Gastrocnemius medialis (tissue), 4 donors: ENCODE measurements at regions of chr15 and their contacts with region 1.

Region 1: GRCh38 chr15:50686468-50687301 is at the start of gene TRPM7:
- DNase-seq: peak; percentile 73 to 86
- ATAC-seq: peak; percentile 91 to 93
- H3K4me3 ChIP-seq: peak within 1 kb of the TSS; percentile 79 to 91 (median 84)
- H3K27ac ChIP-seq: peak within 1 kb of the TSS; percentile 90 to 99 (median 98)
- H3K4me1 ChIP-seq: peaks cover 10 to 30% of the 10 kb centered on the region in 2 donors
- H3K27me3 ChIP-seq: no peaks in the 10 kb centered on the region
- CTCF ChIP-seq: peak in 2 of 5 experiments; percentile 24 to 45
- POLR2A ChIP-seq: peak; percentile 96
- total RNA-seq, gene TRPM7: 8.4 to 23.2 (median 12.7) TPM

Region 2: GRCh38 chr15:50354838-50355618 is 331.7 kb before region 1 on chr15 and contains the start of gene GABPB1:
- in situ Hi-C with region 1: no loop called
- intact Hi-C with region 1: loop called (anchors 2 kb)
- DNase-seq: peak; percentile 79 to 80
- ATAC-seq: peak; percentile 87 to 90
- H3K4me3 ChIP-seq: peak within 1 kb of the TSS; percentile 79 to 94 (median 81)
- H3K27ac ChIP-seq: peak within 1 kb of the TSS; percentile 93 to 97 (median 94)
- H3K4me1 ChIP-seq: peaks cover 44 to 46% of the 10 kb centered on the region in 2 donors
- H3K27me3 ChIP-seq: no peaks in the 10 kb centered on the region
- CTCF ChIP-seq: no peak
- POLR2A ChIP-seq: peak; percentile 53 to 64
- total RNA-seq, gene GABPB1: 7.4 to 11.5 (median 8.7) TPM

Region 3: DNA sequence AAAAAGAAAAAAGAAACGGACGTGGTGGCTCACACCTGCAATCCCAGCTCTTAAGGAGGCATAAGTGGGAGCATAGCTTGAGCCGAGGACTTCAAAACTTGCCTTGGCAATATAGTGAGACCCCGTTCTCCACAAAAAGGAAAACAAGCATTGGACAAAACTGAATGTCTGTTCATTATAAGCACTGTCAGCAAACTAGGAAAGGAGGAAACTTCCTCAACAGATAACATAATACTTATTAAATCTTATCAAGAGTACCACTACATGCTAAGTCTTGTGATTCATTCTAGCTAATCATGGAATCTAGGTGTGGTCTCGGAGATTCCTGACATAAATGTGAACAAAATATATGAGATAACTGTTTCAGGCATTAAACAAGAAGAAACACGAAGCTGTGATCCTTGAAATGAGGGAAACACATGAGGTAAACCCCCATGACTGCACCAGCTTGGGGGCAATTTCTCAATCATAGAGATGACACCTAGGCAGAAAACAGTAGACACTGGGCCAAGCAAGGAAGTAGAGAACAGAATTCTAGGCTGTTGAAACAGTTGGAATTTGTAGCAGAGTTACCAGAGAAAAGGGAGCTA is 33.4 kb before region 1 on chr15:
- in situ Hi-C with region 1: no loop called
- intact Hi-C with region 1: no loop called
- DNase-seq: no peak
- ATAC-seq: no peak
- H3K4me3 ChIP-seq: no peak overlapping the region
- H3K27ac ChIP-seq: no peak overlapping the region
- H3K4me1 ChIP-seq: no peaks in the 10 kb centered on the region
- H3K27me3 ChIP-seq: no peaks in the 10 kb centered on the region
- CTCF ChIP-seq: no peak
- POLR2A ChIP-seq: no peak

Region 4: DNA sequence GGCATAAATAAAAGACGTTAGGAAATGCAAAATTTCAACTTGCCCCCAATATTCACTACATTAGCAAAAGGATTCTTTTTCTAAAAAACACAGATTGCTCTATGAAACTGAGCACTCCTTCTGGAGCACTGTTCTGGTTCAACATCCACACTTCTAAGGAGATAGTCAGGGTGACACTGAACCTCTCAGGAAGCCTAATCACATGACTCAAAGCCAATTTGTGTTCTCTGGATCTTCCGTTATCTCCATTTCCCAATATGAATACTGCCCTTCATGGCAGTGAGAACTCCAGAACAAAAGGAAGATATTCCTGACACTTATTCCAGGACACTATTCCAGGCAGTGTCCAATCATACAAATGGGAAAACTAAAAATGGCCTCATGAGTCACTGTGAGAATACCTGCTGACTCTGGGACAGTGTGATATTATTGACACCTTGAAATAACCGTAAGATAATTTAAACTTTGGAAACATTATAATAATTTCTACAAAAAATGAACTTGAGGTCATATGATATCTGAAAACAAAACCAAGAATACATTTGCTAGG is 21.3 kb after region 1 on chr15:
- in situ Hi-C with region 1: no loop called
- intact Hi-C with region 1: loop called (anchors 1 kb)
- DNase-seq: no peak
- ATAC-seq: peak; percentile 79 to 87
- H3K4me3 ChIP-seq: no peak overlapping the region
- H3K27ac ChIP-seq: peak overlapping the region; percentile 55 to 74 (median 72)
- H3K4me1 ChIP-seq: peaks cover 8 to 11% of the 10 kb centered on the region in 2 donors
- H3K27me3 ChIP-seq: no peaks in the 10 kb centered on the region
- CTCF ChIP-seq: no peak
- POLR2A ChIP-seq: no peak

Region 5: GRCh38 chr15:50735156-50735555 is 48.5 kb after region 1 on chr15:
- in situ Hi-C with region 1: no loop called
- intact Hi-C with region 1: no loop called
- DNase-seq: no peak
- ATAC-seq: no peak
- H3K4me3 ChIP-seq: no peak overlapping the region
- H3K27ac ChIP-seq: no peak overlapping the region
- H3K4me1 ChIP-seq: no peaks in the 10 kb centered on the region
- H3K27me3 ChIP-seq: no peaks in the 10 kb centered on the region
- CTCF ChIP-seq: no peak
- POLR2A ChIP-seq: no peak

Region 6: DNA sequence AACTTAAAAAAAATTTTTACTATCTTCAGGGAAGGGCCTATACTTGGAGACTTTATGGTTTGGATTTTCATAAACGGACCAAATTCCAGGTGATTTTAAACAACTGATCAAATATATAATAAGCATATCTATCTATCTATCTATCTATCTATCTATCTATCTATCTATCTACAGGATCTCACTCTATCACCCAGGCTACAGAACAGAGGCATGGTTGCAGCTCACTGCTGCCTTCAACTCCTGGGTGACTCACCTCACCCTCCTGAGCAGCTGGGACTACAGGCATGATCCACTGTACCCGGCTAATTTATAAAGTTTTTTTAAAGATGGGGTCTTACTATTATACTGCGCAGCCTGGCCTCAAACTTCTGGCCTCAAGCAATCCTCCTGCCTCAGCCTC is 72.1 kb after region 1 on chr15:
- in situ Hi-C with region 1: loop called in 2 of 4 experiments (anchors 10 kb)
- intact Hi-C with region 1: no loop called
- DNase-seq: no peak
- ATAC-seq: peak in 1 of 2 donors; percentile 55
- H3K4me3 ChIP-seq: no peak overlapping the region
- H3K27ac ChIP-seq: peak overlapping the region; percentile 60 to 98 (median 94)
- H3K4me1 ChIP-seq: peaks cover 51 to 70% of the 10 kb centered on the region in 2 donors
- H3K27me3 ChIP-seq: no peaks in the 10 kb centered on the region
- CTCF ChIP-seq: no peak
- POLR2A ChIP-seq: no peak

Region 7: DNA sequence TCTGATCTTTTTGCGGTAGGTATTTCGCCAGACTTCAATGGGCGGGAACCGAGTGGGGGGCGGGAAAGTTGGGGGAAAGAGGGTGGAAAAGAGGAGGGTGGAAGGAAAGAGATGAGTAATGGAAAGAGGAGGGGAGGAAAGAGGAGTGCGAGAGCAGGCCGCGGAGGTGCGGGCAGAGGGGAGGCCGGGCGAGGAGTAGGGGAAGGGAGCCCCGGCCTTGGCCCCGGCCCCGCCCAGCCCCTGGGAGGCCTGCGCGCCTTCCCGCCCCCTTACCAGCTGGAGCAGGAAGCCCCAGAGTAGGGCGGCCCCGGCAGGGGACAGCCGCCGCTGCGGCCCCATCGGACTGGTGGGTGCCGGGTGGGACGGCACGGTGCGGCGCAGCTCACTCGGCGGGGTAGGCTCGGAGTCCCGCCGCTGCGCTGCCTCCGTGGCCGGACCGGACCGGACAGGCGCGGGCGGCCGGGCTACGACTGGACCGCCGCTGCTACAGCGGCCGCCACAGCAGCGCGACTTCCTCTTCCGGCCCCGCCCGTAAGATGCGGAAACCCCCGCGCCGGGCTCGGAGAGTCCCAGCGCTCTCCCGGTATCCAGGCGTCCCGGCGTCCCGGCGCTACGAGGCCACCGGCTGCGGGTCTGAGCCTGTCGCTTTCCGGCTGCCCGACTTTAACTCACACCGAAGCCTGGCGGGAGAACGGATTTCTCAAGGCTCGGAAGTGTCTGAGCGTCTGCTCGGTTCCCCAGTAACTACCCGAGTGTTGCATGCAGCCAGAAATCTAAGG is 78.7 kb after region 1 on chr15 and contains the start of gene SPPL2A:
- in situ Hi-C with region 1: loop called in 1 of 4 experiments (anchors 10 kb)
- intact Hi-C with region 1: loop called (anchors 1 kb)
- DNase-seq: peak; percentile 75 to 87
- ATAC-seq: peak; percentile 39 to 42
- H3K4me3 ChIP-seq: peak within 1 kb of the TSS; percentile 67 to 81 (median 74)
- H3K27ac ChIP-seq: peak within 1 kb of the TSS; percentile 93 to 98 (median 97)
- H3K4me1 ChIP-seq: peaks cover 37 to 46% of the 10 kb centered on the region in 2 donors
- H3K27me3 ChIP-seq: no peaks in the 10 kb centered on the region
- CTCF ChIP-seq: peak in 1 of 5 experiments; percentile 5
- POLR2A ChIP-seq: peak; percentile 96 to 97
- total RNA-seq, gene SPPL2A: 577 to 774 (median 620) TPM